ENCODE measurements at regions of chr12 and their contacts with region 1.

Region 1: GRCh38 chr12:13864081-13864673 is 117.2 kb downstream of the GRIN2B start:
- DNase-seq: peak; percentile 84 to 88 (median 85)
- ATAC-seq: peak; percentile 87
- H3K4me3 ChIP-seq: no peak overlapping the region
- H3K27ac ChIP-seq: no peak overlapping the region
- H3K4me1 ChIP-seq: no peaks in the 10 kb centered on the region
- H3K27me3 ChIP-seq: no peaks in the 10 kb centered on the region
- CTCF ChIP-seq: peak; percentile 70 to 84 (median 81)
- POLR2A ChIP-seq: no peak

Region 2: DNA sequence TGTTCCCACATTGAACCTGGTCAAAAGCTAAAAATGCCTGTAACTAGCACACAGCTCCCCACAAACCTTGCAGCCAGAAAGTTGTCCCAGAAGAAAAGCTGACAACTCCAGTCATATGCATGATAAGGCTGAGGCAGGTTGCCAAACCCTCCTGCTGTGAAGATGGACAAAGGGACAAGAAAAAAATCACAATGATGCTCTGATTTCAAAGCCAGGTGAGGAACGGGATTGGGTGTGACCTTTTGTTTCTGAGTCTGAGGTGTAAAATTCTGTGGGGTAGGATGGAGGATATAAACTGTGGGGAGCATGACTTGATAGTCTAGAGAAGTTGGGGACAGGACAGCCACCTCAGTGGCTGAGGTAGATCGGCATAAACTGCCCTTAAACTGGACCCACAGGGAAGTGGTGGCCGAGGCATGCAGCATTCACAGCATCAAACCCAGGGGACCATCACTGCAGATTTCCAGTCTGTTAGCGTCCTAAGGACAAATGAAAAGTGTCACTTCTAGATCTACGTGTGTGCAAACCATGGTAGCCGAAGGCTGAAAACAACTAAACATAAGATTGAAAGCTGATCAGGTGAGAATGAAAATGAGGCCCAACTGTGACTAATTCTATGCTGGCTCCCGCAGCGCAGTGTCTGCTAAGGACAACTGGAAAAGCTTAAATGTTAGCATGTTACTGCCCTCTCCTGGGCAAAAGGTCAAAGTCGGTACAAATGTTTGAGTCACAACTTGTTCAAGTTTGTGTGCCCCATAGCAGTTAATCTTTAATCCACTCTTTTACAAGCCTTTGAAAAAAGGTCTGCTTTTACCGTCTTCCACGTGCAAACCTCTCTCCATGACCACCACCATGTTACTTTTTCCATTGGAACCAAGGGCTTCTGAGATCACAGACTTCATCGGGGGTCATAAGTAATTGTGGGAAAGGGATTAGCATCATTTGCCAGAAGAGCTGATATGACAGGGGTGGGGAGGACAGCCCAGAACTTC is 77.4 kb after region 1 on chr12:
- intact Hi-C with region 1: loop called (anchors 10 kb)
- DNase-seq: peak; percentile 73 to 91 (median 88)
- ATAC-seq: peak; percentile 96
- H3K4me3 ChIP-seq: no peak overlapping the region
- H3K27ac ChIP-seq: peak overlapping the region; percentile 18 to 59 (median 36)
- H3K4me1 ChIP-seq: peaks cover 25% of the 10 kb centered on the region
- H3K27me3 ChIP-seq: no peaks in the 10 kb centered on the region
- CTCF ChIP-seq: peak in 6 of 7 experiments; percentile 35 to 84 (median 68)
- POLR2A ChIP-seq: no peak

Region 3: GRCh38 chr12:14157088-14157747 is 293.0 kb after region 1 on chr12:
- intact Hi-C with region 1: loop called (anchors 10 kb)
- DNase-seq: no peak
- ATAC-seq: no peak
- H3K4me3 ChIP-seq: no peak overlapping the region
- H3K27ac ChIP-seq: no peak overlapping the region
- H3K4me1 ChIP-seq: no peaks in the 10 kb centered on the region
- H3K27me3 ChIP-seq: no peaks in the 10 kb centered on the region
- CTCF ChIP-seq: no peak
- POLR2A ChIP-seq: no peak

Measured in body of pancreas (tissue), 4 donors.